Activated CD4-positive, alpha-beta memory T cell treated with anti-CD3 and anti-CD28 coated beads for 36 hours (primary cell): ENCODE measurements at regions of chrX and their contacts with region 1.

Region 1: DNA sequence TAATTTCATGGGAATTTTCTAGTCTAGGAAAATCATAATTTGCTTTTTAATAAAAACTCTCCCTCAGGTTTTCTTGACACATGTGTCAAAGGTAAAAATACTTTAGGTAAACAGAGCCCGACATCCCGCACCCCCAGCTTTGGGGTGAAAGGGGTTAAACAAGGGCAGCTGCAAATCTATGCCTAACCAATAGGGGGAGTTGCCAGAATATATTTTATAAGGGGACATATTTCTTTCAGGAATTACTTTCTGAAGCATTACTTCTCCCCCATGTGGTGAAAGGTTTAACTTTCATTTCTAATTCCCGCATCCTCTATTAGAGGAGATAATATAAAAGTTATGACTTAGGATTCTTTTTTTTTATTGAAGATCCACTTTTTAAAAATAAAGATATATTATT is 53.9 kb upstream of the HEPH start:
- DNase-seq: peak; percentile 9
- H3K4me3 Mint-ChIP-seq: no peak overlapping the region
- H3K27ac Mint-ChIP-seq: no peak overlapping the region
- H3K4me1 Mint-ChIP-seq: no peaks in the 10 kb centered on the region
- H3K27me3 Mint-ChIP-seq: no peaks in the 10 kb centered on the region

Region 2: GRCh38 chrX:65581661-65582339 is 528.3 kb before region 1 on chrX:
- CTCF ChIA-PET with region 1: interaction called, 5 read pairs
- POLR2A ChIA-PET with region 1: no interaction called
- intact Hi-C with region 1: loop called (anchors 1 kb)
- DNase-seq: peak; percentile 63
- H3K4me3 Mint-ChIP-seq: no peak overlapping the region
- H3K27ac Mint-ChIP-seq: no peak overlapping the region
- H3K4me1 Mint-ChIP-seq: peaks cover 3% of the 10 kb centered on the region
- H3K27me3 Mint-ChIP-seq: no peaks in the 10 kb centered on the region